Natural killer cell (primary cell): ENCODE measurements at regions of chr12 and their contacts with region 1.

Region 1: GRCh38 chr12:93397412-93397811 is 19.7 kb downstream of the NUDT4 start:
- DNase-seq: no peak
- ATAC-seq: no peak
- H3K4me3 ChIP-seq: no peak overlapping the region
- H3K4me3 Mint-ChIP-seq: no peak overlapping the region
- H3K27ac ChIP-seq: no peak overlapping the region
- H3K27ac Mint-ChIP-seq: no peak overlapping the region
- H3K4me1 ChIP-seq: no peaks in the 10 kb centered on the region
- H3K4me1 Mint-ChIP-seq: no peaks in the 10 kb centered on the region
- H3K27me3 ChIP-seq: no peaks in the 10 kb centered on the region
- H3K27me3 Mint-ChIP-seq: no peaks in the 10 kb centered on the region
- CTCF ChIP-seq: no peak

Region 2: GRCh38 chr12:92987362-92987761 is 410.1 kb before region 1 on chr12:
- intact Hi-C with region 1: loop called (anchors 2 kb)
- DNase-seq: peak in 1 of 2 donors; percentile 72
- ATAC-seq: peak; percentile 47 to 69 (median 61)
- H3K4me3 ChIP-seq: no peak overlapping the region
- H3K4me3 Mint-ChIP-seq: no peak overlapping the region
- H3K27ac ChIP-seq: no peak overlapping the region
- H3K27ac Mint-ChIP-seq: no peak overlapping the region
- H3K4me1 ChIP-seq: peaks cover 5% of the 10 kb centered on the region
- H3K4me1 Mint-ChIP-seq: peaks cover 0 to 4% of the 10 kb centered on the region in 2 donors
- H3K27me3 ChIP-seq: no peaks in the 10 kb centered on the region
- H3K27me3 Mint-ChIP-seq: peaks cover 6 to 16% of the 10 kb centered on the region in 2 donors
- CTCF ChIP-seq: peak; percentile 52

Region 3: GRCh38 chr12:93098077-93098476 is 299.3 kb before region 1 on chr12:
- intact Hi-C with region 1: loop called (anchors 2 kb)
- DNase-seq: peak; percentile 23 to 81
- ATAC-seq: peak; percentile 80 to 90 (median 84)
- H3K4me3 ChIP-seq: no peak overlapping the region
- H3K4me3 Mint-ChIP-seq: no peak overlapping the region
- H3K27ac ChIP-seq: no peak overlapping the region
- H3K27ac Mint-ChIP-seq: peak overlapping the region in 1 of 2 donors; percentile 2
- H3K4me1 ChIP-seq: peaks cover 3% of the 10 kb centered on the region
- H3K4me1 Mint-ChIP-seq: peaks cover 7 to 13% of the 10 kb centered on the region in 2 donors
- H3K27me3 ChIP-seq: no peaks in the 10 kb centered on the region
- H3K27me3 Mint-ChIP-seq: no peaks in the 10 kb centered on the region
- CTCF ChIP-seq: peak; percentile 73

Region 4: DNA sequence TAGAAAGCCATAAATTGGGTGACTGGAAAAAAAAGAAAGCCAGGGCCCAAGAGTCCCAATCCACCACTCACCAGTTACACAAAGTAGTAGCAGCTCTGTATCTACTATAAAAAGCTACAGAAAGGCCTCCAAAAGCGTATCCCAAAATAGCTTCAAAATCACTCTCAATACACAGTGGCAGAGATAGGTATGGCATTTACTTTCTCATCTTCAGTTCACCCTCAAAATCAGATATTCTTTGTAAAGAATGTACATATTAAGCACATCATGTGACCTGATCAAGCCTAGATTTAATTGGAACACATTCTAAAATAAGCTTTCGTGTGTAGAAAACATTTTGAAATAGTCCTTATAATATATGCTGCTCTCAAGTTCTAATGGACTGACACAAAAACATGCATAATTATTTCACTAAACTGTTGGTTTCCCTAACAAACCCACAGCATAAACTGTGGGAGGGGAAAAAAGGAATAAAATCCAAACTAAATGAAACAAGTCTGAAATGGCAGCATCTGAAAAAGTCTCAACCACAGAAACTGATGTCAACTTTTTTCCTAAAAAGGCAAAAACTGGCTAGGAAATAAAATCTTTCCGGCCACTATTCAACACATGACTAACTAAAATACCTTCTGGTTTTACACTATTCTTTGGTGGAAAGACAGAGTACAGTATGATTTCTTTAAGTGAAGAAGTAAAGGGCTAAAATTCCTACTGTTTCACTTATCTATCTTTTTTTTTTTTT is 18.5 kb after region 1 on chr12:
- intact Hi-C with region 1: no loop called
- DNase-seq: no peak
- ATAC-seq: no peak
- H3K4me3 ChIP-seq: no peak overlapping the region
- H3K4me3 Mint-ChIP-seq: no peak overlapping the region
- H3K27ac ChIP-seq: no peak overlapping the region
- H3K27ac Mint-ChIP-seq: peak overlapping the region; percentile 18 to 45
- H3K4me1 ChIP-seq: peaks cover 6% of the 10 kb centered on the region
- H3K4me1 Mint-ChIP-seq: peaks cover 60 to 61% of the 10 kb centered on the region in 2 donors
- H3K27me3 ChIP-seq: no peaks in the 10 kb centered on the region
- H3K27me3 Mint-ChIP-seq: no peaks in the 10 kb centered on the region
- CTCF ChIP-seq: no peak